Head of caudate nucleus (tissue), 42 donors: ENCODE measurements at regions of chr7 and their contacts with region 1.

Region 1: DNA sequence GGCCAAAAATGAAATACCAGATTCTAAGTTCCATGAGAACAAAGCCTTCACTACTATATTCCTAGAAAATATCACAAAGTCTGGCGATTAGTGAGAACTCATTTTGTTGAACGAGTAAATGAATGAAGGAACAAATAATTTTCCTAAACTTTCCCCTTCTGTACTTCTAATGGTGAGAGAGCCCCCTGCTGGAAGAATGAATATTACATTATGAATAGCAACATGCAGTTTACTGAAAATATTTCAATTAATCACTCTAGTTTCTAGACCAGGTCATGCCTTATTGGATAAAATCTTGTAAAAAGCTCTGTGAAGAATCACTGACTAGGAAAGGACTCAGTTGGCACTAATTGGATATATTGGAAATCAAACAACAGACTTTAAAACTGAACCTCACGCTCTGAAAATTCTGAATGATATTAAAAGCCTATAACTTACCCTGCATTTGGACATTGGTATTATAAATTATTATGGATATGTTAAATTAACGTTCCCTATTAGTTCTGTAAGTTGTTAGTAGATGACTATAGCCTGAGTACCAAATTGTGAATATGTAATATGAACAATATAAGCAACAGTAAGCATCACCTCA is 32.4 kb upstream of the MTPN start:
- DNase-seq: peak in 3 of 42 donors; percentile 8 to 35 (median 10)

Region 2: GRCh38 chr7:135320277-135320676 is 689.3 kb before region 1 on chr7:
- intact Hi-C with region 1: no loop called
- DNase-seq: peak in 40 of 42 donors; percentile 8 to 81 (median 56)

Region 3: DNA sequence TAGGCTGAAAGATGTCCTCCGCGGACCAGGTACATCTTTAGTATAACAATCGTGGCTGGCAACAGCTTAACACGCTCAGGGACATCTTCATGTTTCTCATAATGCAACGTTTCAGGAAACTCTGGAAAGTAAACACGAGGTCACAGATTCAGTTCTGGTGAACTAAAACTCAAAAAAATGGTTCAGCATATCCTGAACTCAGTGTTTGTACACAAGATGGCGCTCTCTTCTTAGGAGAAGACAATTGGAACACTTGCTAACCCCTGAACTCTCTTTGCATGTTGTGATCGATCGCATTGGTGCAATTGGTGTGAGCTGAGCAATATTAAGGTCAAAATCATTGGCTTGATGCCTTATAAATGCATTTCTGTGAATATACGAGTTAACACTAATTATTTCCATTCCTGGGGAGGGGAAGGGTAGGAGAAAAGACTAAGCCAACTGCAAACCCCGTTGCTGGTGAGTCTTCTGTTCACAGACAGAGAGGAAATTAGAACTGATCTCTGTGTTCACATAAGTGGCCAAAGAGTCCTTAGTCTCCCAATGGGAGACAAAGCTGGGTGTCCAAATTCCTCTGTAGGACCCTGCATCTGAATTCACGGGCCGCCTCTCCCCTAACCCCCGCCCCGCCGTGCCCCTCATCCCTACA is 208.4 kb before region 1 on chr7:
- intact Hi-C with region 1: loop called (anchors 5 kb)
- DNase-seq: peak in 11 of 42 donors; percentile 22 to 73 (median 51)

Region 4: GRCh38 chr7:135901585-135902540 is 107.7 kb before region 1 on chr7:
- intact Hi-C with region 1: no loop called
- DNase-seq: no peak

Region 5: GRCh38 chr7:136446751-136447150 is 437.2 kb after region 1 on chr7:
- intact Hi-C with region 1: no loop called
- DNase-seq: no peak